Dorsolateral prefrontal cortex (tissue), 120 donors: ENCODE measurements at regions of chr12 and their contacts with region 1.

Region 1: DNA sequence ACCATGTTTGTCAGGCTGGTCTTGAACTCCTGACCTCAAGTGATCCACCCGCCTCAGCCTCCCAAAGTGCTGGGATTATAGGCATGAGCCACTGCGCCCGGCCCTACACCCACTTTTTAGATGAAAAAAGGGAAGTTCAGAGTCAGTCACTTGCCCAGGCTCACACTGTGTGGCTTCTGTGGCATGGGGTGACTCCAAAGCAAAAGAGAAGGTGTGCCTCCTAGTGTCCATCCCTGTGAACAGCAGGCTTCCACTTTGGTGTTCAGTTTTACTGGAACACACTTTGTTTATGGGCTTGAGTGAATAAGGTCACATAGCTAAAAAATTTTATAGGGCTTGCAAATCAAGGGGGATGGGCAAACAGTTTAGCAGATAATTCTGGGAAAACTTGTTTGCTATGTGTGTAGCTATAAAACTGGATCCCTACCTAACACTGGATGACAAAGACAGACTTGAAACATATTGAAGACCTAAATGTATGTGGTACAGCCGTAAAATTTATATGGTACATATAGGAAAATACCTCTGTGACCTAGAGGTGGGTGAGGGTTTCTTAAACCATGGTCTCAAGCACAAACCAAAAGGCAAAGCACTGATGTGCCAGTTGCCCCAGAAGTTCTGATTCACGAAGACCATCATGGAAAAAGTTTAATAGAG is 54.9 kb downstream of the EID3 start:
- DNase-seq: peak in 5 of 10 donors; percentile 26 to 63 (median 42)
- H3K4me3 ChIP-seq: no peak overlapping the region
- H3K27ac ChIP-seq: no peak overlapping the region
- H3K27me3 ChIP-seq: no peaks in the 10 kb centered on the region
- CTCF ChIP-seq: peak; percentile 48 to 89 (median 80)

Region 2: DNA sequence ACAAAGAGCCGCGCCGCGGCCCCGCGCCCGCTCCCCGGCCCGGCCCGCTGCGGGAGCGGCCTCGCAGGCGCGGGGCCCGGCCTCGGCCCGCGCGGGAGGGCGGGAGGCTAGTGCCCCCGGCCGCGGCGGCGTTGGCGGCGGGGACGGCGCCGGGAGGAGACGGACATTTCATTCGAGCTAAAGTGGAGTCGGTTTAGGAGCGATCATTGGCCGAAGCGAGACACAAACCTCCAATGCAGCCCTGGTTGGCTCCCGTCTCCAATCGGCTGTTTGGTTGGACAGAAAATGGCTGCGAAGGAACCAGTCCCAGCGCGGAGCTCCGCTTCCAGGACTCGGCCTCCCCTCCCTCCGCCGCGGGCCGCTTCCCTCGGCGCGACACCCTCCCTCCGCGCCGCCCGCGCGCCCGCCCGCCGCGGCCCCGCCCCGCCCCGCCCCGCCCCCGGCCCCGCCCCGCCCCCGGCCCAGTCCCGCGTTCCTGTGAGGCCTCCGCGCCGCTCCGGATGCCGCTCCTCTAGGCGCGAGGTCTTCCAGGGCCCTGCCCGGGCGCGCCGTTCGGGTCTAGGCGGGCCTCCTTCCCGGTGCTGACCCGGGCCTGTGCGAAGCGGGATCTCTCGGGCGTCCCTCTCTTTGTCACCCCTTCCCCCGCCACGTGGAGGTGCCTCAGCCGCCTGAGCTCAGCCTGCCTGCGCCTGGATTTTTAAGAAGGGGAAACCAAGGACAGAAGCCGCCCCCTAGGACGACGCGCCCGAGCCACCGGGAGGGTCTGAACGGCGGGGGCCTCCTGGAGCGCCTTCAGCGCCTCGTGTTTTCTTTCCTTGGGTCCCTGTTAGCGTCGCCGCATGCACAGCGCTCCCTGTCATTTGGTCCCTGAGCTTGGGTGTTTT is 220.3 kb before region 1 on chr12 and contains the start of gene NFYB:
- intact Hi-C with region 1: no loop called
- DNase-seq: peak; percentile 82 to 96 (median 94)
- H3K4me3 ChIP-seq: peak within 1 kb of the TSS; percentile 63 to 92 (median 82)
- H3K27ac ChIP-seq: peak within 1 kb of the TSS; percentile 18 to 97 (median 91)
- H3K27me3 ChIP-seq: no peaks in the 10 kb centered on the region
- CTCF ChIP-seq: peak in 6 of 56 donors; percentile 5 to 18 (median 10)
- total RNA-seq, gene NFYB: 23.1 to 43.8 (median 30.8) TPM

Region 3: GRCh38 chr12:104201238-104202001 is 157.1 kb before region 1 on chr12:
- intact Hi-C with region 1: loop called (anchors 2 to 5 kb)
- DNase-seq: peak in 2 of 10 donors; percentile 24 to 28
- H3K4me3 ChIP-seq: no peak overlapping the region
- H3K27ac ChIP-seq: no peak overlapping the region
- H3K27me3 ChIP-seq: no peaks in the 10 kb centered on the region
- CTCF ChIP-seq: peak in 55 of 56 donors; percentile 45 to 92 (median 74)

Region 4: DNA sequence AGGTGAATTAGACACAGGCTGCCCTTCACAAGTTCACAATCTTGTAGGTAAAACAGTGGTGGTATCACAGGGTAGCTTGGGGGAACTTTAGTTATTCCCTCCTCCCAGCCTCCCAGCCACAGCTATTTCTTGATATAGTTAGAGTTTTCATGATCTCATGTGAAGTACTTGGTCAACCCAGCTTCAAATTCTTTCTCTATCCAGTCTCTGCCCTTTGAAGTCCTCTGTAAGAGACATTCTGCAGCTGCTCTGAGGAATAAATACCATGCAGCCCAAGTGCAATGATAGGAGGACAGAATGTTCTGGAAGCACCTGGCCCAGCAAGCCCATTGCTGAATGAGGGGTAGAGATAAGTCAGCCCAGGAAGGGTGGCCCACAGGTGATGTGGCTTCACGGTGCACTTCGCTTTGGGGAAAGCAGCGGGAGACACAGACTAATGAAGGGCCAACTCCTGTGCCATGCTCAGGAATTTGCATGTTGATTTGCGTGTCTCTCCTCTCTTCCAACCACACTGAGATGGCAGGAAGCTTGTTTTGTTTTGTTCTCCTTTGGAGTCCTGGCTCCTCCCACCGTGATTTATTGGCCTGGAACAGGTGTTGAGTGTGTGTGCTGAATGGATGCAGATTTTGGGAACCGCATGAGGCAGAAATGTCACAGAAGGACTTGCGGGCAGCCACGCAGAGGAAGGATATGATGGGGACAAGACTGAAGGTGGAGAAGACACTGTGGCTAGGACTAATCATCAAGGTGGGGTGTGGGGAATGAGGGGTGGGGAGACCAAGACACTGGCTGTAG is 150.9 kb before region 1 on chr12:
- intact Hi-C with region 1: loop called in 1 of 2 experiments (anchors 5 kb)
- DNase-seq: no peak
- H3K4me3 ChIP-seq: no peak overlapping the region
- H3K27ac ChIP-seq: no peak overlapping the region
- H3K27me3 ChIP-seq: no peaks in the 10 kb centered on the region
- CTCF ChIP-seq: no peak

Region 5: DNA sequence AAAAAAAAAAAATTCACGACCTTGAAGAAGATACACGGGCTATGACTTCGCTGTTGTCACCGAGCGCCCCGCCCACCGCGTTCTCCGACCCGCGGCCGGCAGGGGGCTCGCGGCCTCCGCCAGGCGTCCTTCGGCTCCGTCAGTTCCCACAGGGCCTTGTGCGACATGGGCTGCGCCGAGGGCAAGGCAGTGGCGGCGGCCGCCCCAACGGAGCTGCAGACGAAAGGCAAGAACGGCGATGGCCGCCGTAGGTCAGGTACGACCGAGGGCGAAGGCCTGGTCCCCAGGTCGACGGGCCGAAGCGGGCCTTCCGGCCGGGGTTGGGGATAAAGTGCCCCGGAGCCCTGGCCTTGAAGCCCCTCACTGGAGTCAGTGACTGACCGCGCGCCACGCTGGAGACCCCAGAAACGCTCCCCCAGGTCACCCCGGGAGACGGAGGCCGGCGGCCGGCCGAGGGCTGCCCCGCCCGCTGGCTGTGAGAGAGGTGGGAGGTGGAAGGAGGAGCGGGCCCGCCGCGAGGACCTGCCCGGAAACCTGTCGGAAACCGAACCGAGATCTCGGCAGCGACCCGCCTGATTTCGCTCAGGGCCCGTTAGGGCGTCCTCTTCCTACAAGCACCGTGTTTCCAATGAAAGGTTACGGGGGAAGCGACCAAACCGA is 142.7 kb before region 1 on chr12 and contains the start of gene TXNRD1:
- intact Hi-C with region 1: loop called in 1 of 2 experiments (anchors 5 kb)
- DNase-seq: peak; percentile 48 to 81 (median 62)
- H3K4me3 ChIP-seq: peak within 1 kb of the TSS; percentile 38 to 80 (median 66)
- H3K27ac ChIP-seq: peak within 1 kb of the TSS in 50 of 59 donors; percentile 11 to 88 (median 60)
- H3K27me3 ChIP-seq: no peaks in the 10 kb centered on the region
- CTCF ChIP-seq: peak; percentile 21 to 83 (median 70)
- total RNA-seq, gene TXNRD1: 36.0 to 75.9 (median 53.3) TPM

Region 6: GRCh38 chr12:104286538-104287482 is 71.7 kb before region 1 on chr12:
- intact Hi-C with region 1: loop called in 1 of 2 experiments (anchors 5 kb)
- DNase-seq: peak; percentile 76 to 90 (median 88)
- H3K4me3 ChIP-seq: peak overlapping the region; percentile 52 to 97 (median 81)
- H3K27ac ChIP-seq: peak overlapping the region; percentile 48 to 97 (median 91)
- H3K27me3 ChIP-seq: no peaks in the 10 kb centered on the region
- CTCF ChIP-seq: peak in 16 of 56 donors; percentile 4 to 39 (median 16)